ENCODE measurements at regions of chr6 and their contacts with region 1.

Region 1: DNA sequence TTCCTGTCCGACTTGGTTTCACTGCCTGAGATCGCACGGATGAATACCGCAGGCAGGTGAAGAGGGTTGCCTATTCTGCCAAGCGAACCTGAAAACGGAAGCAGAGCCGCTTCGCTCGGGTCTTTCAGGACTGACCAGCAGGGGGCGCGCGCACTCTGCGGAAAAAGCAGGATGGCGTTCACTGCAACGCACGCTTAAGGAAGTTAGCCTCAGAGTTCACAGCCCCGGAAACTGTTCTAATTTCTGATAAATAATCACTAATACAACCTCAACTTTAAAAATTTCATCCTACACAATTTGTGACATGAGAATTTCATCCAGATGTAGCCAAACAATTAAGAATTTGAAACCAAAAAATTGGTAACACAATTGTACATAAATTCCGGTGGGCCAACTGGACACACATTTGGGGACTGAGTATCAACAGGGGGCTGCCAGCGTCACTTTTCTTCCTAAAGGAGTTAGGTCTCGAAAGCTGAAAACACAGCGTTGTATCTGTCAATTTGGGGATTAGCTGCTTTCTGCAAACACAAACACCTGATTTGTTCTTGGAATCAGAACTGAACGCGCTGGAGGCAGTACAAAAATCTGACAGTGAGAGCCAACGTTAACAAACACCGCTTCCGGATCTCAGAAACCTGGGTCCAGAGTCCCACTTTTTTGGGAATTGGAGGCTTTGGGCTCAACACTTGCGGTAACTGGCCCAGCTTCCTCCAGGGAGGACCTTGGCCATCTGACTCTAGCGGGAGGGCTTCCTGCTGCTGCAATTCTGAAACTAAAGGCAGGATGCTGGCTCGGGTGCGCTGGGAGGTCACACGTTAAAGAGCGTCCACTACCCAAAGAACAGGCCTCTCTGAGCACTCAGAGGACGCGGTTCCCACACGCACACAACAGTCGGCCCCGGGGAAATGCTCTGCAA is 8.8 kb downstream of the PXDC1 start:
- DNase-seq: peak; percentile 73 to 88
- H3K4me3 ChIP-seq: no peak overlapping the region
- H3K4me3 Mint-ChIP-seq: no peak overlapping the region
- H3K27ac Mint-ChIP-seq: peak overlapping the region; percentile 16
- H3K4me1 ChIP-seq: peaks cover 14% of the 10 kb centered on the region
- H3K4me1 Mint-ChIP-seq: peaks cover 14% of the 10 kb centered on the region
- H3K27me3 ChIP-seq: no peaks in the 10 kb centered on the region
- H3K27me3 Mint-ChIP-seq: no peaks in the 10 kb centered on the region
- CTCF ChIP-seq: peak; percentile 90 to 91

Region 2: GRCh38 chr6:3805448-3806123 is 62.9 kb after region 1 on chr6:
- CTCF ChIA-PET with region 1: no interaction called
- POLR2A ChIA-PET with region 1: no interaction called
- intact Hi-C with region 1: loop called (anchors 2 kb)
- DNase-seq: no peak
- H3K4me3 ChIP-seq: no peak overlapping the region
- H3K4me3 Mint-ChIP-seq: no peak overlapping the region
- H3K27ac Mint-ChIP-seq: peak overlapping the region; percentile 81
- H3K4me1 ChIP-seq: peaks cover 52% of the 10 kb centered on the region
- H3K4me1 Mint-ChIP-seq: peaks cover 42% of the 10 kb centered on the region
- H3K27me3 ChIP-seq: no peaks in the 10 kb centered on the region
- H3K27me3 Mint-ChIP-seq: no peaks in the 10 kb centered on the region
- CTCF ChIP-seq: no peak

Region 3: GRCh38 chr6:3887150-3887700 is 144.5 kb after region 1 on chr6:
- CTCF ChIA-PET with region 1: no interaction called
- POLR2A ChIA-PET with region 1: no interaction called
- intact Hi-C with region 1: loop called (anchors 2 kb)
- DNase-seq: no peak
- H3K4me3 ChIP-seq: no peak overlapping the region
- H3K4me3 Mint-ChIP-seq: no peak overlapping the region
- H3K27ac Mint-ChIP-seq: no peak overlapping the region
- H3K4me1 ChIP-seq: peaks cover 16% of the 10 kb centered on the region
- H3K4me1 Mint-ChIP-seq: peaks cover 16% of the 10 kb centered on the region
- H3K27me3 ChIP-seq: no peaks in the 10 kb centered on the region
- H3K27me3 Mint-ChIP-seq: no peaks in the 10 kb centered on the region
- CTCF ChIP-seq: no peak

Region 4: DNA sequence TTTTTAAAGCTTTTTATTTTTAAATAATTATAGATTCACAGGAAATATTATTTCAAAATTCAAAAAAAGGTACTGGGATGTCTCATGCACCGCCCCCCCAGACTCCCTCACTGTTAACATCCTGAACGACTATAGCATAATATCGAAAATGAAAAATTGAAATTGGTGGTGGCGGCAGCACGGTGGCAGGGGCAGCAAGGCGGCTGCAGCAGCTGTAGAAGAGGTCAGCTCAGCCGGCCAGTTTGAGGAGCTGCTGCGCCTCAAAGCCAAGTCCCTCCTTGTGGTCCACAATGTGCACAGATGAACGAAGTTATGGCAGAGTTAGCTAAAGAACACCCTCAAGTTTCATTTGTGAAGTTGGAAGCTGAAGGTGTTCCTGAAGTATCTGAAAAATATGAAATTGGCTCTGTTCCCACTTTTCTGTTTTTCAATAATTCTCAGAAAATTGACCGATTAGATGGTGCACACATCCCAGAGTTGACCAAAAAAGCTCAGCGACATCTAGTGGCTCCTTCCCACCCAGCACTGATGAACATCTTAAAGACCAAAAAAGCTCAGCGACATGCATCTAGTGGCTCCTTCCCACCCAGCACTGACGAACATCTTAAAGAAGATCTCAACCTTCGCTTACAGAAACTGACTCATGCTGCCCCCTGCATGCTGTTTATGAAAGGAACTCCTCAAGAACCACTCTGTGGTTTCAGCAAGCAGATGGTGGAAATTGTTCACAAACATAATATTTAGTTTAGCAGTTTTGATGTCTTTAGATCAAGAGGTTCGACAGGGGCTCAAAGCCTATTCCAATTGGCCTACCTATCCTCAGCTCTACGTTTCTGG is 235.4 kb after region 1 on chr6:
- CTCF ChIA-PET with region 1: interaction called, 12 read pairs
- POLR2A ChIA-PET with region 1: no interaction called
- intact Hi-C with region 1: loop called (anchors 1 kb)
- DNase-seq: peak; percentile 64
- H3K4me3 ChIP-seq: no peak overlapping the region
- H3K4me3 Mint-ChIP-seq: no peak overlapping the region
- H3K27ac Mint-ChIP-seq: no peak overlapping the region
- H3K4me1 ChIP-seq: no peaks in the 10 kb centered on the region
- H3K4me1 Mint-ChIP-seq: no peaks in the 10 kb centered on the region
- H3K27me3 ChIP-seq: no peaks in the 10 kb centered on the region
- H3K27me3 Mint-ChIP-seq: no peaks in the 10 kb centered on the region
- CTCF ChIP-seq: peak; percentile 51 to 68

Region 5: DNA sequence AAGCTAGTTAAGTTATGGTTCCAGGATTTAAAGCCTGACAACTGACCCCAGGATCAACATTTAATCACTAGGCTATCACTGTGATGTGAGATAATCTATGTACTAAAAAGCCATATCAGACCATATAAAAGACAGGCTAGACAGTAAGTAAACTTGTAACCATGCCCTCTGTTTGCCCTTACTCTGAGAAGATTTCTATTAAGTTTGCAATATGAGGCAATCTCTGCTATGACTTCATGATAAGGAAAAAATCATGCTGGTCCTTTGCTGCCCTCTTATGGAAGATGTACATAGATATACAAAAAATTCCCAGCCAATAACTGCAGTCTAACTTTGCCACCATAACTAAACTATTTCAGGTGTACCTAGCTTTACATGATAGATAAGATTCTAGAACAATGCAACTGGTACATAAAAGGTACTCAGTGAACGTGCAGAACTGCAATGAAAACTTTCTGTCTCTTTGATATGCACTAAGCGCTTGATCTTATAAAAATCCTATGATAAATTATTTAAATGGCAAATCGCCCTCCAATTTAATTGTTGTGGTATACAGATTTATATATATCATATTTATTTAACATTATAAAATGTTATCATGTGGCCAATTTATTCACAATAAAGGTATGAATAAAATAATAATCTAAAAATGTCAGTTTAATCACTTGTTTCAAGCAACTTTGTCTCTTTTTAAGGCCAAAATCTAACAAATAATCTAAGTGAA is 265.8 kb after region 1 on chr6:
- CTCF ChIA-PET with region 1: no interaction called
- POLR2A ChIA-PET with region 1: no interaction called
- intact Hi-C with region 1: loop called (anchors 5 kb)
- DNase-seq: peak in 1 of 2 experiments; percentile 68
- H3K4me3 ChIP-seq: no peak overlapping the region
- H3K4me3 Mint-ChIP-seq: no peak overlapping the region
- H3K27ac Mint-ChIP-seq: no peak overlapping the region
- H3K4me1 ChIP-seq: peaks cover 7% of the 10 kb centered on the region; the same call in 1 of the 2 replicates
- H3K4me1 Mint-ChIP-seq: peaks cover 6% of the 10 kb centered on the region
- H3K27me3 ChIP-seq: no peaks in the 10 kb centered on the region
- H3K27me3 Mint-ChIP-seq: no peaks in the 10 kb centered on the region
- CTCF ChIP-seq: peak; percentile 48 to 52

Measured in Caco-2 (cell line).